Tibial artery (tissue), 4 donors: ENCODE measurements at regions of chr5 and their contacts with region 1.

Region 1: GRCh38 chr5:96601811-96602244 is 60.3 kb upstream of the CAST start:
- DNase-seq: peak in 1 of 2 donors; percentile 51
- H3K4me3 ChIP-seq: no peak overlapping the region
- H3K27ac ChIP-seq: no peak overlapping the region
- H3K4me1 ChIP-seq: no peaks in the 10 kb centered on the region
- H3K27me3 ChIP-seq: no peaks in the 10 kb centered on the region
- CTCF ChIP-seq: peak; percentile 79 to 88

Region 2: DNA sequence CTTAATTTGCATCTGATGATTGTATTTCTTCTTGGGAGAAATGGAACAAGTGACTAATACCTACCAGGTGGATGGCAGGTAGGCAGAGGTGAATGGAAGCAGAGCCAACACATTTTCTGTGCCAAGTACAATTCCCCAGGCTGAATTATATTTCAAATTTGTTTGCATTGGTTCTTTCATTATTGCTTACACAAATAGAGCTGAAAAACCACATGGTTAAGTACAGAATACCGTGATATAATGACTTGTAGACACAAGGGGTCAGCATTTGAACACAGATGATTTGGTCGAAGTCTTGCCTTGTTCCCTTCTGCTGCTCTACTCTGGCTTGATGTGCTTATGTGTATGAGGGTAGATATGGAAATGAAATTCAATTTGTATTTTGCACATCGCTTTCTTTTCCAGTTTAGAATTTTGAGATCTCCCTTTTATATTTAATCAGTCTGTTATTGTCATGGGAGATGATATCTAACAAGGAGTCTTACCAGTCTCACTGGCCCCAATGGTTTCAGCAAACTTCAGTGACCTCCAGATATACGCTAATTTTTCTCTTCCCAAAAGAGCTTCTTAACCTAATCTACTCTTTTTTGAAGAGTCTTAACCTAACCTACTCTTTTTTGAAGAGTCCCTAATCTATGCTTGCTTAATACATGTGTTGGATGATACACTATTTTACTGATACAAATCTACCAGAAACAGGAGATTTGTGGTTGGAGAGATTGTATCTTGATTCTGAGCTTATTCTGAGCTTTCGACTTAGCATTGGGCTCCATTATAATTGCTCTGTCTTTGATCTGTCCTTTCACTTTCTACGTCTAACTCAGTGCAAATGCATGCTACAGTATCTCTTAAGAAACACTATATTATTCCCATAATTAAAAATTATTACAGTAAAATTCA is 256.9 kb before region 1 on chr5:
- intact Hi-C with region 1: loop called (anchors 2 kb)
- DNase-seq: no peak
- H3K4me3 ChIP-seq: no peak overlapping the region
- H3K27ac ChIP-seq: no peak overlapping the region
- H3K4me1 ChIP-seq: peaks cover 0 to 22% (median 10%) of the 10 kb centered on the region in 4 donors
- H3K27me3 ChIP-seq: no peaks in the 10 kb centered on the region
- CTCF ChIP-seq: peak; percentile 61 to 81